ENCODE measurements at regions of chr6 and their contacts with region 1.

Region 1: DNA sequence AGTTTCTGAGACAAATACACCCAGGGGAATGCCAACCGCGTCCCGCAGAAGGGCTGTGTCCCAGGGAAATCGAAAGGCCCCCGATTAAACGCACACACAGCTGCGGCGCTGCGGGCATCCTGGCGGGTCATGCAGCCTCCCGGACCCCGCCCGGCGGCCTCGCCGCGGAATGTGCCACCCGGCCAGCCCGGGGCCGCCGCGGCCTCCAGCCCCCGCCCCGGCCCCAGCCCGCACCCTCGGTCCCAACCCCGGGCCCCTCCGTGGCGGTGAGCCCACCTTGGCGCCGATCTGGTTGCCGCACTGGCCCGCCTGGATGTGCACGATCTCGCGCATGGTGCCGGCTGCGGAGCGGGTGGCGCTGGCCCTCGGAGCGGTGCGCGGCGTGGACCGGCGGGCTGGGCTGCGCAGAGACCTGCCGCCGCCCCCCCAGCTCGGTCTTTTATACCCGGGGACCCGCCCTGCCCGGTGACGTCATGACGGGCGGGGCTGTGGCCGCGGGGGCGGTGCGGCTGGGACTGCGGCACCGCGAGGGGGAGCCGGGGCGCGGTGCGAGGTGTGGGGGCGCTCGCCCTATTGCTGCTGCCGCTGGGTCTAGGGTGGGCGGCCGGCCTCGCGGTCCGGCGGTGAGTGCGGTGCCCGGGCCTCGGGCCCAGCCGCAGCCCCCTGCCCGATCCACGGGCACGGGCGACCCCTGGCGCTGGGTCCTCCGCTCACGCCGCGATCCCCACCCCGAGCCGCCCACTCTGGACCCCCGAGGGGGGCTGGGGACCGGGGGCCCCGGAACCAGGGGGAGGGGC is at the start of gene TUBB2A:
- DNase-seq: peak; percentile 92 to 95
- ATAC-seq: peak; percentile 94
- H3K4me3 ChIP-seq: peak within 1 kb of the TSS; percentile 83 to 89
- H3K27ac ChIP-seq: peak within 1 kb of the TSS in 1 of 2 donors; percentile 58
- H3K4me1 ChIP-seq: no peaks in the 10 kb centered on the region
- H3K27me3 ChIP-seq: peaks cover 0 to 2% of the 10 kb centered on the region in 2 donors
- total RNA-seq, gene TUBB2A: 33.7 to 40.0 TPM

Region 2: GRCh38 chr6:3081960-3082359 is 75.4 kb before region 1 on chr6:
- intact Hi-C with region 1: no loop called
- DNase-seq: peak in 1 of 2 donors; percentile 72
- ATAC-seq: no peak
- H3K4me3 ChIP-seq: no peak overlapping the region
- H3K27ac ChIP-seq: no peak overlapping the region
- H3K4me1 ChIP-seq: no peaks in the 10 kb centered on the region
- H3K27me3 ChIP-seq: no peaks in the 10 kb centered on the region

Region 3: GRCh38 chr6:3231247-3232016 is 74.1 kb after region 1 on chr6:
- intact Hi-C with region 1: loop called (anchors 5 kb)
- DNase-seq: peak in 1 of 2 donors; percentile 75
- ATAC-seq: peak; percentile 79
- H3K4me3 ChIP-seq: peak overlapping the region; percentile 9 to 29
- H3K27ac ChIP-seq: no peak overlapping the region
- H3K4me1 ChIP-seq: no peaks in the 10 kb centered on the region
- H3K27me3 ChIP-seq: peaks cover 0 to 2% of the 10 kb centered on the region in 2 donors

Region 4: DNA sequence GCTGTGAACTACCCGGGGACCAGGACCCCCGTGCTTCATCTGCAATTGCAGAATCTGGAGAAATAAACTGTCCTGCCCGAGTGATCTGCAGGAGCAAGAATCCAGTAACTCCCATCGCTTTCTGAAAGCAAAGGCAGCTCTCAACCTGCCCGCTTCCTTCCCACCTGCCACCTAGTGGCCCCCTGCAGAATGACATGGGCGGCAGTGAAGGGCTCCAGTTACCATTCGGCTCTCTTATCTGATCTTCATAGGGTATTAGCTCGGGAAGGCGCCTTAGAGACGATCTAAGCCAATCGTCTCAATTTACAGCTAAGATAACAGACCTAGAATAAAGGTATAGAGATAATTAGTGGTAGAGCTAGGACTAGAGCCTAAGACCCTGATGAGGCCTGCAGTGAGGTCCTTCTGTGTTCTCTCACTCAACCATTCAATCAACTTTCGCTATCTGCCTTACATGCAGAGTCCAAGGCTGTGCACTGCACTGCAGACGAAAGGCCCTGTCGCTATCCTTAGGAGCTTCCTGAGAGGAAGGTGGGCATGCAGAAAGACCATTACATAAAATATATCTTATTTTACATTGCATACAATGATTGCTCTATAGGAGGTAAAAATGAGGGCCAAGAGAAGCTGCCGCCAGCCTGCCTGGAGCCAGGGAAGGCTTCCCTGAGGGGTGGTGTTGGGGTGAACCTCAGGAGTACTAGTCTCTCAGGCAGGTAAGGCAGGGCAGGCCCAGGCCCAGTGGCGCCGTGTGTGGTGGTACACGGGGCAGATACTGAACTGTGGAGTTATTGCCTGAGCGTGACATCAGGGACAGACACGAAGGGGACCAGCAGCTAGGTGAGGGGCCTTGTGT is 94.4 kb after region 1 on chr6:
- intact Hi-C with region 1: loop called (anchors 1 to 2 kb)
- DNase-seq: peak; percentile 86 to 94
- ATAC-seq: peak; percentile 81
- H3K4me3 ChIP-seq: no peak overlapping the region
- H3K27ac ChIP-seq: no peak overlapping the region
- H3K4me1 ChIP-seq: no peaks in the 10 kb centered on the region
- H3K27me3 ChIP-seq: no peaks in the 10 kb centered on the region

Measured in aorta (tissue), 5 donors.